Activated CD4-positive, alpha-beta memory T cell treated with anti-CD3 and anti-CD28 coated beads for 36 hours (primary cell): ENCODE measurements at regions of chr9 and their contacts with region 1.

Region 1: GRCh38 chr9:33290247-33291030 is at the start of gene NFX1:
- DNase-seq: peak; percentile 100
- H3K4me3 Mint-ChIP-seq: peak within 1 kb of the TSS; percentile 80
- H3K27ac Mint-ChIP-seq: peak within 1 kb of the TSS; percentile 100
- H3K4me1 Mint-ChIP-seq: peaks cover 54% of the 10 kb centered on the region
- H3K27me3 Mint-ChIP-seq: no peaks in the 10 kb centered on the region
- total RNA-seq, gene NFX1: 36.5 to 38.6 TPM

Region 2: DNA sequence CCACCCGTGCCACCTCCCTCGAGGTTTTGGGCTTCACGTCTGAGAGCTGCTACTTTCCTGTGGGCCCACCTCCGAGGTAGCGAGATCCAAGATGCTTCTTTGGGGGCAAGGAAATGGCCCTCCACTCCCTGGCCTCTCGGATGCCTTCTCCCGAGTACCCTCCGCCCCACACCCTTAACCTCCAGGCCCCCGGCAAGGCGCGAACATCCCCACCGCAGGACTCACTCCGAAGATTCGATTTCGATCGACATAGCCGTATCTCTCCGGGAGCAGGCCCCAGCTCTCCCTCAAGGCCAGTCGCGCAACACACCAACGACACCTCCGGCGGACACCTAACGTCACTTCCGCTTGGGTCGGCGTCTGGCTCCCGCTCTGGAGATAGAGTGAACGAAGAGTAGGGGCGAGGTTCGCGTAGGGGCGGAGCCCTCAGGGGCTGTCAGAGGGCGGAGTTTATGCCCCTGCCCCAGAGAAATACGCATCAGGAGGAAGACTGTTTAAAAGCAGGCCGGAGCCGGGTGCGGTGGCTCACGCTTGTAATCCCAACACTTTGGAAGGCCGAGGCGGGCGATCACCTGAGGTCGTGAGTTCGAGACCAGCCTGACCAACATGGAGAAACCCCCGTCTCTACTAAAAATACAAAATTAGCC is 214.0 kb before region 1 on chr9 and contains the start of gene SMU1:
- CTCF ChIA-PET with region 1: no interaction called
- POLR2A ChIA-PET with region 1: no interaction called
- intact Hi-C with region 1: loop called (anchors 1 kb)
- DNase-seq: peak; percentile 98
- H3K4me3 Mint-ChIP-seq: peak within 1 kb of the TSS; percentile 100
- H3K27ac Mint-ChIP-seq: peak within 1 kb of the TSS; percentile 99
- H3K4me1 Mint-ChIP-seq: peaks cover 42% of the 10 kb centered on the region
- H3K27me3 Mint-ChIP-seq: no peaks in the 10 kb centered on the region
- total RNA-seq, gene SMU1: 25.8 to 26.1 TPM

Region 3: DNA sequence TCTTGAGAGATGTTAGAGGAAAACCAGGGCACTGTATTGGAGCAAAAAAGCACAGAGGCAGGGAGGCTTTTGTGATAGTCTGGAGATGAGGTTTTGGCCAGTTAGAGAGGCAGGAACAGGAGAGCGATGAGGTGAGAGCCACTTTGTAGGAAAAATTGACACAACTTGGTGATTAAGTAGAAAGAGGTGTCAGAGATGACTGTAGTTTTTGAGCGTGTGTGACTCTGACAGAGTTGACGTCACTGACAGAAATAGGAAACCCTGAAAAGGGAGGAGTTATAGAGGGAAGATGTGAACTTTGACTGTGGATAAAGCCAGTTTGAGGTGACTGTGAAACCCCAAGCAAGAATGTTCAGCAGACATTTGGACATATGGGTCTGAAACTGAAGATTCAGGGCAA is 15.6 kb after region 1 on chr9:
- CTCF ChIA-PET with region 1: interaction called, 10 read pairs
- POLR2A ChIA-PET with region 1: interaction called, 9 read pairs
- intact Hi-C with region 1: loop called (anchors 1 kb)
- DNase-seq: peak; percentile 59
- H3K4me3 Mint-ChIP-seq: no peak overlapping the region
- H3K27ac Mint-ChIP-seq: no peak overlapping the region
- H3K4me1 Mint-ChIP-seq: peaks cover 25% of the 10 kb centered on the region
- H3K27me3 Mint-ChIP-seq: no peaks in the 10 kb centered on the region

Region 4: DNA sequence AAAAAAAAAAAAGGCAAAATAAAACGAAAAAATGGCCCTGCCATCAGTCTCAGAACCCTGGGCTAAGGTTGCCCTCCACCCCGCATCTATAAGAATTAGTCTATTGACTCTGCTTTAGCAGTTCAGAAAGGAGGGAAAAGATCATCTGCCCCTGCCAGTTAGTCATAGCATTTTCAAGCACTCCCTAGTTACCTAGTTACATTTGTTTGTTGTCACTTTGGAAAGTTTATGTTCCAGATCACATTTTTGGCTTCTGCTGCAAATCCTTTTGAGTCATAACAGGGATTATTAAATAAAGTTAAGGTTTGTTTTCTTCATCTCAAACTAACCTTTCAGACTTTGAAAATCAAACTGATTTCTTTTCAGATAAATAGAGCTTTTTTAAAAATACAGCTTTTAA is 59.9 kb after region 1 on chr9:
- CTCF ChIA-PET with region 1: no interaction called
- POLR2A ChIA-PET with region 1: no interaction called
- intact Hi-C with region 1: no loop called
- DNase-seq: no peak
- H3K4me3 Mint-ChIP-seq: no peak overlapping the region
- H3K27ac Mint-ChIP-seq: peak overlapping the region; percentile 46
- H3K4me1 Mint-ChIP-seq: no peaks in the 10 kb centered on the region
- H3K27me3 Mint-ChIP-seq: no peaks in the 10 kb centered on the region

Region 5: DNA sequence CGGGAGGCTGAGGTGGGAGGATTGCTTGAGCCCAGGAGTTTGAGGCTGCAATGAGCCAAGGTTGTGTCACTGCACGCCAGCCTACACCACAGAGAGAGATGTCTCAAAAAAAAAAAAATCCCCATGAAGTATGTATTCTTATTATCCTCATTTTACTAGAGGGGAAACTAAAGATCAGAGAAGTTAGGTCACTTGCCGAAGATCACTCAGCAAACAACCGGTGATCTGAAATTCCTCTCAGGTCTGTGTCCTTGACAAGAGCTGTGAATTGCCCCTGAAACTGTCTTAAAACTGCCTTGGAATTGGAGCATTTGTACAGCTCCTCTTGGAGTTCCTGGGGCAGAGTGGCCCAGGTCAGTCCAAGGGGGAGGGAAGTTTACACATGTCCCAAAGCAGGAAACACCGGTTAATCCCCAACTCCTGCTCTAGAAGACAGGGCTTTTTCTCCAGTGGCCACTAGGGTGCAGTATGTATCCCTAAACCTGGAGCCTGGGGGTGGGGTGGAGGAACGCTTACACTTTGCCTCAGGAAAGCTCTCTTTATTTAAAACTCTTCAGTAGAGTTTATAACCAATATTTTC is 84.3 kb after region 1 on chr9:
- CTCF ChIA-PET with region 1: interaction called, 14 read pairs
- POLR2A ChIA-PET with region 1: no interaction called
- intact Hi-C with region 1: no loop called
- DNase-seq: peak; percentile 79
- H3K4me3 Mint-ChIP-seq: no peak overlapping the region
- H3K27ac Mint-ChIP-seq: no peak overlapping the region
- H3K4me1 Mint-ChIP-seq: peaks cover 4% of the 10 kb centered on the region
- H3K27me3 Mint-ChIP-seq: no peaks in the 10 kb centered on the region

Region 6: DNA sequence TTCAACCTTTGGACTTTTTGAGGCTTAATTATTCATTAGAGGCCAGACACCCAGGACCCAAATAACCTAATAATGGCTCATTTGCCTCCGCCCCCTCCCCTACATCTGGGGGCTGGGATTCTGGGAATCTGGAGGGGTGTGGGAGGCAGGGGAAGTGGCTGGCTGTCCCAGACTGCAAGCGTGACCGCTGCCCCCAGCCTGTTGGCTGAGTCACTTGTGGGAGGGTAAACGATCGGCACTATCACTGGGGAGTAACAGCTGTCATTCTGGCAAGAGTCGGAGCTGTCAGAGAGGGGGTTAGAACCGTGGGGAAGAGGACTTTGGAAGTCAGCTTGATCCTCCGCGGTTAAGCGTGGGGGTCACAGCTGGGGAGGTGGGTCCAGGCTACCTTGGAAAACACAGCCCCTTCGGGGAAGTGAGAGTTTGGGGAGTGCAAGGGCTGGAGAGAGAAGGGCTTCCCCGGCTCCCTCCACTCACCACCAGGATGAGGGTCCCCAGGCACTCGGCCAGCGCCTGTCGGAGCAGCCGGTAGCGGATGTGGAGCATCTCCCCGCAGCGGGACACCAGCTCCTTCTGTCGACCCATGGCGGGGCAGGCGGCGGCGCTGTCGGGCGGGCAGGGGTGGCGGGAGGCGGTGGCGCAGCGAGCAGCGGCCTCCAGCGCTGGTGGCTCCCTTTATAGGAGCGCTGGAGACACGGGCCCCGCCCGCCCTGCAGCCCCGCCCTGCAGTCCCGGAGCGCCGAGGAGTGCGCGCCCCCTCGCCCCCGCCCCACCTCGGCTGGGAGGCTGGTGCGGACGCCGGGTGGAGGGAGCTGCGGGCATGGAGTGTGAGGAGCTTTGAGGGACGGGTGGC is 156.7 kb after region 1 on chr9 and contains the start of gene AQP3:
- CTCF ChIA-PET with region 1: interaction called, 12 read pairs
- POLR2A ChIA-PET with region 1: interaction called, 6 read pairs
- intact Hi-C with region 1: loop called (anchors 1 kb)
- DNase-seq: peak; percentile 84
- H3K4me3 Mint-ChIP-seq: peak within 1 kb of the TSS; percentile 89
- H3K27ac Mint-ChIP-seq: peak within 1 kb of the TSS; percentile 94
- H3K4me1 Mint-ChIP-seq: peaks cover 50% of the 10 kb centered on the region
- H3K27me3 Mint-ChIP-seq: no peaks in the 10 kb centered on the region
- total RNA-seq, gene AQP3: 19.4 to 20.2 TPM

Region 7: GRCh38 chr9:33466565-33467495 is 176.4 kb after region 1 on chr9:
- CTCF ChIA-PET with region 1: interaction called, 14 read pairs
- POLR2A ChIA-PET with region 1: no interaction called
- intact Hi-C with region 1: no loop called
- DNase-seq: peak; percentile 80
- H3K4me3 Mint-ChIP-seq: no peak overlapping the region
- H3K27ac Mint-ChIP-seq: no peak overlapping the region
- H3K4me1 Mint-ChIP-seq: peaks cover 5% of the 10 kb centered on the region
- H3K27me3 Mint-ChIP-seq: no peaks in the 10 kb centered on the region